Ascending aorta (tissue), 2 donors: ENCODE measurements at regions of chr10 and their contacts with region 1.

Region 1: DNA sequence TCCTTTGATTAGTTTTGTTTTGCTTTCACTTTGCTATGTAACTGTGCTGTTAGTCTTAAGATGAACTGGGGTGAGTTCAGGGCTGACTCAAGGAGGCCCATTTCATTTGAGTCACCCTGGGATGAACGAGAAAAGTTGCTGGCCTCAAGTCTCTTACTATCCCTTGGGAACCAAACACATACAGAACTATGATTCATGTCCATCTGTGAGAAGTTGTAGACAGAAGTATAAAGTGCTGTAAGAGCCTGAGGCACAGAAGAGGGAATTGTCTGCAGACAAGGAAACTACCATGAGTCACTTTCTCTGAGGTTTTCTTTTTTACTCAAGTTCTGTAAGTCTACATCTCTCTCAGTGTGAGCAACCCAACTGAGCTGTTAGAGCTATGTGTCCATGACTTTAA is 179.8 kb upstream of the CSTF2T start:
- DNase-seq: peak; percentile 35 to 87
- H3K4me3 ChIP-seq: no peak overlapping the region
- H3K27ac ChIP-seq: peak overlapping the region; percentile 71 to 86
- H3K4me1 ChIP-seq: peaks cover 0 to 20% of the 10 kb centered on the region in 2 donors
- H3K27me3 ChIP-seq: no peaks in the 10 kb centered on the region
- CTCF ChIP-seq: no peak

Region 2: GRCh38 chr10:50807851-50808776 is 1071.1 kb before region 1 on chr10:
- intact Hi-C with region 1: no loop called
- DNase-seq: no peak
- H3K4me3 ChIP-seq: no peak overlapping the region
- H3K27ac ChIP-seq: no peak overlapping the region
- H3K4me1 ChIP-seq: no peaks in the 10 kb centered on the region
- H3K27me3 ChIP-seq: no peaks in the 10 kb centered on the region
- CTCF ChIP-seq: no peak

Region 3: GRCh38 chr10:51718804-51719291 is 160.4 kb before region 1 on chr10:
- intact Hi-C with region 1: loop called (anchors 5 kb)
- DNase-seq: no peak
- H3K4me3 ChIP-seq: no peak overlapping the region
- H3K27ac ChIP-seq: peak overlapping the region; percentile 81 to 82
- H3K4me1 ChIP-seq: peaks cover 18 to 37% of the 10 kb centered on the region in 2 donors
- H3K27me3 ChIP-seq: no peaks in the 10 kb centered on the region
- CTCF ChIP-seq: no peak

Region 4: GRCh38 chr10:51860257-51860656 is 19.0 kb before region 1 on chr10:
- intact Hi-C with region 1: loop called (anchors 2 kb)
- DNase-seq: peak in 1 of 2 donors; percentile 88
- H3K4me3 ChIP-seq: no peak overlapping the region
- H3K27ac ChIP-seq: peak overlapping the region; percentile 67 to 71
- H3K4me1 ChIP-seq: peaks cover 7 to 23% of the 10 kb centered on the region in 2 donors
- H3K27me3 ChIP-seq: no peaks in the 10 kb centered on the region
- CTCF ChIP-seq: no peak